ENCODE measurements at regions of chr9 and their contacts with region 1.

Region 1: GRCh38 chr9:116572095-116572748 is 114.9 kb upstream of the TRIM32 start:
- H3K4me3 Mint-ChIP-seq: no peak overlapping the region
- H3K27ac Mint-ChIP-seq: no peak overlapping the region
- H3K4me1 Mint-ChIP-seq: no peaks in the 10 kb centered on the region
- H3K27me3 Mint-ChIP-seq: no peaks in the 10 kb centered on the region

Region 2: DNA sequence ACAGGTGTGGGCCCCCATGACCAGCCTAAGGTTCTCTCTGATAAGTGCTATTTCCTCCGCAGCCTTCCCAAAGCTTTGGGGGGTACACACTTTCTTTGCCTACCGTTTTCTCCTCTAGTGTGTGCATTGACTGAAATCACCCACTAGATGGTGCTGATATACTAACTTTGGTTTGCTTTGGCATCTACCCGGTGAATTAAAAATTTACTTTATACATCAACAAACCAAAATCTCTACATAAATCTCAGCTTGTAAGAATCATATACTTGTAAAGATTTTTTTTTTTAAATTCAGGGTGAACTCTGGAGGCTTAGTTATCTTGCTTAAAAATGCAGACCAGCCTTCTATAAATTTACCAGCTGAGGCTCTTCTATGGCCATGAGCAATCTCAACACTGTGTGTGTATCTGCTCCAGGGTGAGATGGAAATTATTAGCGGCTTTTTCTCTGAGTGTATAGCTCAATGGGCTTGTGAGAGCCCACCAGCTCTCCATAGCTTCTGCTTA is 978.6 kb before region 1 on chr9:
- intact Hi-C with region 1: loop called (anchors 1 kb)
- H3K4me3 Mint-ChIP-seq: no peak overlapping the region
- H3K27ac Mint-ChIP-seq: no peak overlapping the region
- H3K4me1 Mint-ChIP-seq: no peaks in the 10 kb centered on the region
- H3K27me3 Mint-ChIP-seq: peaks cover 11% of the 10 kb centered on the region

Region 3: DNA sequence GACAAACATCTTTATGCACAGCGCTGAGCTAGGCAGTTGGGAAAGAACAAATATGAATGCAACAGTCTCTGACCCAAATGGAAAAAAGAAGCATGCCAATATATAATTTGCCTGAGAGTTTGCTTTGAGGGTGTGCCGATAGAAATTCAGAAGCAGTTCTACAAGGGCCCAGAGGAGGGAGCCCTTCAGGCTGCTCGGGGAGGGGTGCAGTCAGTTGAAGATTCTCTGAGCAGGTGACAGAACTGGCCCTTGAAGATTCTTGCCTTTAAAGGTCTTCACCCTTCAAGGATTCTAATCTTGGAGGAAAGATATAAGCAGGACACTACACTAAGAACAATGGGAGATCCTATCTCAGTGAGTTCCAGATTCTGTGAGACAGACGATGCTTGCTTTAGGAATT is 422.4 kb before region 1 on chr9:
- intact Hi-C with region 1: loop called (anchors 5 kb)
- H3K4me3 Mint-ChIP-seq: no peak overlapping the region
- H3K27ac Mint-ChIP-seq: no peak overlapping the region
- H3K4me1 Mint-ChIP-seq: no peaks in the 10 kb centered on the region
- H3K27me3 Mint-ChIP-seq: peaks cover 44% of the 10 kb centered on the region

Region 4: GRCh38 chr9:116599344-116599884 is 27.2 kb after region 1 on chr9:
- intact Hi-C with region 1: no loop called
- H3K4me3 Mint-ChIP-seq: no peak overlapping the region
- H3K27ac Mint-ChIP-seq: no peak overlapping the region
- H3K4me1 Mint-ChIP-seq: no peaks in the 10 kb centered on the region
- H3K27me3 Mint-ChIP-seq: no peaks in the 10 kb centered on the region